ENCODE measurements at regions of chr1 and their contacts with region 1.

Region 1: DNA sequence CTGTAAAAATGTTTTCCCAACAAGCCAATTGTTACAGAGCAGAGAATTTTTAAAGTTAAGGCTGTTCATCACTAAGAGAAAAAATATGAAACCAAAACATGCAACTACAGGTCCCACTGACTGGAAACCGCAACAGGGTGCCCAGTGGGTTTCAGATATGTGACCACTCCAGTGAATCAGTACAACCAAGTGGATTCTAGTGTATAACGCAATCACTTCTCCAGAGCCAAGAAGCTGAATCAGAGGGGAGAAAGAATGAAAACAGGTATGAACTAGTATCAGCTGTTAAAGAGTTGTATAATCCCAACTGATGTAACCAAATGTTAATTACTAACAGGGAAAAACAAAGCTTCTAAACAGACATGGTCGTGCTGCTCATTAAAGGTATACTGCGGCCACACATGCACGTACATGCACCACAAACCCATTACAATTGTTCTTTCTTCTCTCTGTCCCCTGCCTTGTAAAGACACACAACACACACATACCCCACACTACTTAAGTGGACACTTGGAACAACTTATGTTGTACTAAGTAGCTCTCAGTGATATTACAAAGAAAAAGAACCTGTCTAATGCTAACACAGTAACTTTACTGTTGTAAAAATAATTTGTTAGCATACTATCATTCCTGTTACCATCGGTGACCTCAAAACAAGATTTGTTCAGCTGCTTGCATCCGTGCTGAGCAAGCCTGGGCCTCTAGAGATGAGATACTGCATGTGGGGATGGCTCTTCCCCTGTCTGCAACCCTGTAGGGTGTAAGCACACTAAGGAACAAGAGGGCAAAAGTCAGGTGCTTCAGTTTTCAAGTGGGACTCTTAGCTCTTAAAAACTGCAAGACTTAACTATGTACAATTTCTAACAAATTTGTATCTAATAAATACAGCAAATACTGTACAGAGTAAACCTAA is 74.2 kb downstream of the PTPN14 start:
- DNase-seq: peak; percentile 75
- H3K4me3 ChIP-seq: peak overlapping the region in 1 of 3 experiments; percentile 15
- H3K27ac ChIP-seq: peak overlapping the region; percentile 70
- H3K4me1 ChIP-seq: peaks cover 28% of the 10 kb centered on the region
- H3K27me3 ChIP-seq: no peaks in the 10 kb centered on the region
- CTCF ChIP-seq: no peak
- POLR2A ChIP-seq: no peak

Region 2: DNA sequence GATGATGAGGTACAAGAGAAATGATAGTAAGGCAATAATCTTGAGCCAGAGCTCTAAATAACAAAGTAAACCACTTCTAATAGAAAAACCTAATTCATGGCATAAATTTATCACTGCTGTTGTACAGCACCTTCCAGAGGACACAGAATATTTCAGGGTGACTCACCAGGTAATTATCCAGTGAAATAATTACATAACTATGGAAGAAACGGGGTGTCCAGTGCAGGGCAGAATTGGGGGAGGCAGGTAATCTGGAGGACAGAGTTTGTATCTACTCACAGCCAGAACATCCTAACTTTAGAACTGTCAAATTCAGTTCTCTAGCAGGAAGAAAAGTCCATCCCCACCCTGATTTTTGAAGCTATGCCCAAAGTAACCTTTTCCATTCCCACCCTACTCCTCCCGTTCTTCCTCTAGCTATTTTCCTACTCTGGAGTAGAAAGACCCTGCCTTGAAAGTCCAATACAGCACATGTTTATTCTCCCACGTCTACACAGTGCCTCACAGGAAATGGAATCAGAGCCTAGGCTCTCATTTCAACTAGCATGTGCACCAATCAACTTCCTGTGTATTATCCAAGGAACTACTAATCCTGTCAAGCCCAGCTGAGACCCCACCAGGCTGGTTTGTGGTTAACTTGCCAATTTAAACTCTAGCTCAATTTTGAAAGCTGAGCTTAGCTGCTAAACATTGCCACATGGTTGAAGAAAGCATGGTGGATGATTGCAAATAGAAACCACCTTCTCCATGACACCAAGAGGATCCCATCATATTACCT is 22.4 kb before region 1 on chr1:
- CTCF ChIA-PET with region 1: interaction called, 11 read pairs
- POLR2A ChIA-PET with region 1: no interaction called
- dilution Hi-C with region 1: no loop called
- intact Hi-C with region 1: no loop called
- DNase-seq: peak; percentile 87
- H3K4me3 ChIP-seq: peak overlapping the region in 1 of 3 experiments; percentile 15
- H3K27ac ChIP-seq: peak overlapping the region; percentile 94
- H3K4me1 ChIP-seq: peaks cover 65% of the 10 kb centered on the region
- H3K27me3 ChIP-seq: no peaks in the 10 kb centered on the region
- CTCF ChIP-seq: no peak
- POLR2A ChIP-seq: peak; percentile 56

Measured in endothelial cell of umbilical vein (primary cell).